PC-9 (cell line): ENCODE measurements at regions of chr7 and their contacts with region 1.

Region 1: GRCh38 chr7:50226145-50226544 is 78.4 kb upstream of the IKZF1 start:
- DNase-seq: no peak
- H3K4me3 ChIP-seq: no peak overlapping the region
- H3K27ac ChIP-seq: no peak overlapping the region
- H3K4me1 ChIP-seq: no peaks in the 10 kb centered on the region
- H3K27me3 ChIP-seq: no peaks in the 10 kb centered on the region
- CTCF ChIP-seq: no peak

Region 2: GRCh38 chr7:50085344-50085743 is 140.8 kb before region 1 on chr7:
- CTCF ChIA-PET with region 1: no interaction called
- POLR2A ChIA-PET with region 1: interaction called, 10 read pairs
- intact Hi-C with region 1: no loop called
- DNase-seq: no peak
- H3K4me3 ChIP-seq: no peak overlapping the region
- H3K27ac ChIP-seq: no peak overlapping the region
- H3K4me1 ChIP-seq: no peaks in the 10 kb centered on the region
- H3K27me3 ChIP-seq: peaks cover 13% of the 10 kb centered on the region
- CTCF ChIP-seq: no peak

Region 3: GRCh38 chr7:50206453-50207250 is 19.5 kb before region 1 on chr7:
- CTCF ChIA-PET with region 1: no interaction called
- POLR2A ChIA-PET with region 1: no interaction called
- intact Hi-C with region 1: no loop called
- DNase-seq: no peak
- H3K4me3 ChIP-seq: no peak overlapping the region
- H3K27ac ChIP-seq: no peak overlapping the region
- H3K4me1 ChIP-seq: no peaks in the 10 kb centered on the region
- H3K27me3 ChIP-seq: peaks cover 69% of the 10 kb centered on the region
- CTCF ChIP-seq: no peak